Thyroid gland (tissue), 4 donors: ENCODE measurements at regions of chr15 and their contacts with region 1.

Region 1: DNA sequence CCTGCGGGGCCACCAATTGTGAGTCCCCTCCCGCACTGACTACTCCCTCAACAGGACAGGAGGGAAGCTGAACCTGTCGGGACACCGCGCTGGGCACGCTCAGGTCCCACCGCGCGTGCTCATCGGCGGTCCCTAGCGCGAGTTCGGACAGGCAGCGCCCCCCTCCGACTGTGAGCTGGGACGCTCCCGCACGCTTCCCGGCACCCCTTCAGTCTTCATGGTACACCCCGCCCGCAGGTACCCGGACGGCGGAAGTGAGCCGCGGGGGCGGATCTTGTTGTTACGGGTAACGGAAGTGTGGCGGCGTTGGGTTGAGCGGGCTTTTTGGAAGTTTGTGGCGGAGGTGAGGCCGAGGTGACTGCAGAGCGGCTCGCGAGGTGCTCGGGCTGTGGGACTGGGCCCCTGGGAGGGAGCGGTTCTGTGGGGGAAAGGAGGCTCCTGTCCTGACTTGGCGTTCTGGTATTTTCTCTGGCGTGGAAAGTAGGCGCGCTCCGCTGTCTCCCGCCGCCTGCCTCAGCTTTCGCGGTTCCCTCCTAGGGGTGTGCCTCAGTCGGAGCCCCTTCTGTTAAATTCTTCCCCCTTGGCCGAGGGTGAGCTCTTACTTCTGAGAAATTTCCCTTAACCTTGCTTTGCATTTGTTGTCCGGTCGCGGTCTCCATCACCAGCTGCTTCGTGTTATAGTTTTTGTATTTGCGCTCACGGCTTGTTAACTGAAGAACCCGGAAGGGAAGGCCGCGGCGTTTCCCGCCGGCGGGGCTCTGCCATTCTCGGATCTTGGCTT is at the start of gene FANCI:
- DNase-seq: peak; percentile 96 to 98
- H3K4me3 ChIP-seq: peak within 1 kb of the TSS; percentile 11 to 61 (median 44)
- H3K27ac ChIP-seq: no peak within 1 kb of the TSS
- H3K4me1 ChIP-seq: peaks cover 8% of the 10 kb centered on the region in 2 donors
- H3K27me3 ChIP-seq: no peaks in the 10 kb centered on the region
- CTCF ChIP-seq: peak in 5 of 6 experiments; percentile 29 to 53 (median 38)
- POLR2A ChIP-seq: peak in 1 of 2 donors; percentile 55
- total RNA-seq, gene FANCI: 0.67 to 1.8 (median 1.5) TPM

Region 2: DNA sequence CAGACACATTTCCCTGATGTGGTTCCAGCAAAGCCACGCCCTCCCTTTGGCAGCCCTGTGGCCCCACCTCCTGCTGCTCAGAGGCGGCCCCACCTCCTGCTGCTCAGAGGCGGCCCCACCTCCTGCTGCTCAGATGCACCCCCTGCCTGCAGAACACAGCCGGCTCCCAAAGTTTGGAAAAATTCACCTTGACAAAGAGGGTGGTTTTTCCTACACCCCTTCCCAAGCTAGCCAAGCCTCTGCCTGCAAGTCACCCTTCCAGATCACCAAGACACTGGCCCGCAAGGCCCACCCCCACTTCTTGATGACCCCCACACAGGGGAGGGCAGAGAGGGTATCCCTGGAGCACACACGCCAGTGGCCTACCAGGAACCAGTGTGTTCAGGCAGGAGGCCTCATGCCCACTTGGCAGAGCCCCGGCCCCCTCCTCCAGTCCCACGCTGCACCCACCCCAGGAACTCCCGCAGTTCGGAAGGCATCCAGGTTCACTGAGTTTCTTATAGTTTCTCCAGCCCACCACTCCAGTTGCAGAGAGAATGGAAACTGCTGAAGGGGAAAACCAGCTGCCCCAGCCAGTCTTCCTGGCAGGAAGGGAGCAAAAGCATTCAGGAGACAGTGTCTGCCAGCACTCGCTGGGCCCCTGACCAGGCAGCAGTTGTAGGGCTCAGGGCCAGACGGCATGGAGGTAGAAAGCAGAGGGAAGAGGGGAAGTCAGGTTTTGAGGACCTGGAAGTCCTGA is 346.3 kb before region 1 on chr15:
- intact Hi-C with region 1: loop called (anchors 10 kb)
- DNase-seq: peak; percentile 88 to 94
- H3K4me3 ChIP-seq: no peak overlapping the region
- H3K27ac ChIP-seq: peak overlapping the region; percentile 36 to 85 (median 80)
- H3K4me1 ChIP-seq: peaks cover 21 to 35% of the 10 kb centered on the region in 2 donors
- H3K27me3 ChIP-seq: no peaks in the 10 kb centered on the region
- CTCF ChIP-seq: peak; percentile 20 to 74 (median 58)
- POLR2A ChIP-seq: peak in 1 of 2 donors; percentile 22

Region 3: DNA sequence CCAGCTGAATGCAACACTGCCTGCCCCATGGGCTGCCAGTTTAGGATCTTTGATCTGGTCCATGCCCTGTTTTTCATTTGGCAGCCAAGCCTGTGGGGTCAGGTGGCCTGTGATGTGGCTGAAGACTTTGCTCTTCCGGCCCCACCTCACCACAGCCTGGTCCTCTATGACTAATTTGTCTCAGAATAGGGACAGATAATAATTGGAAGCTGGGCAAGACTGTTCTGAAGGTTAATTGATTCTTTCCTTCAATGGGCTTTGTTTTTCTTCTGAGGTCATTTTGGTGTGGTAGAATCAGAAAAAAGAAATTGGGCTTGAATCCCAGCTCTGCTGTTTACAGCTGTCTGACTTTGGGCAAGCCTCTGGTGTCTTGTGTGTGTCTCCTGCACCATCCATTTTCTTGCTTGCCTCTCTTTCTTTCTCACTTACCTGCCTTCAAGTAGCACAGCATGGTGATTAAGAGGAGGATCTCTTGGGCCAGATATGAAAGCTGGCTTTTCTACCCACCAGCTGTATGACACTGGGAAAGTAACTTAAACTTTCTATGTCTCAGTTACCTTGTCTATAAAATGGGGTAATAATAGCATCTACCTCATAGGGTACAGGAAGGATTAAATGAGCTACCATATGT is 131.4 kb before region 1 on chr15:
- intact Hi-C with region 1: no loop called
- DNase-seq: no peak
- H3K4me3 ChIP-seq: no peak overlapping the region
- H3K27ac ChIP-seq: peak overlapping the region in 2 of 3 donors; percentile 39 to 41
- H3K4me1 ChIP-seq: peaks cover 5 to 16% of the 10 kb centered on the region in 2 donors
- H3K27me3 ChIP-seq: no peaks in the 10 kb centered on the region
- CTCF ChIP-seq: no peak
- POLR2A ChIP-seq: no peak

Region 4: GRCh38 chr15:89195836-89196235 is 48.0 kb before region 1 on chr15:
- intact Hi-C with region 1: no loop called
- DNase-seq: no peak
- H3K4me3 ChIP-seq: no peak overlapping the region
- H3K27ac ChIP-seq: peak overlapping the region in 1 of 3 donors; percentile 68
- H3K4me1 ChIP-seq: peaks cover 4 to 27% of the 10 kb centered on the region in 2 donors
- H3K27me3 ChIP-seq: no peaks in the 10 kb centered on the region
- CTCF ChIP-seq: no peak
- POLR2A ChIP-seq: no peak